ENCODE measurements at regions of chr1 and their contacts with region 1.

Region 1: GRCh38 chr1:205061665-205062069 is 18.7 kb downstream of the CNTN2 start:
- DNase-seq: peak; percentile 81
- ATAC-seq: peak; percentile 72
- H3K4me3 Mint-ChIP-seq: no peak overlapping the region
- H3K27ac Mint-ChIP-seq: no peak overlapping the region
- H3K4me1 Mint-ChIP-seq: no peaks in the 10 kb centered on the region
- H3K27me3 Mint-ChIP-seq: no peaks in the 10 kb centered on the region

Region 2: DNA sequence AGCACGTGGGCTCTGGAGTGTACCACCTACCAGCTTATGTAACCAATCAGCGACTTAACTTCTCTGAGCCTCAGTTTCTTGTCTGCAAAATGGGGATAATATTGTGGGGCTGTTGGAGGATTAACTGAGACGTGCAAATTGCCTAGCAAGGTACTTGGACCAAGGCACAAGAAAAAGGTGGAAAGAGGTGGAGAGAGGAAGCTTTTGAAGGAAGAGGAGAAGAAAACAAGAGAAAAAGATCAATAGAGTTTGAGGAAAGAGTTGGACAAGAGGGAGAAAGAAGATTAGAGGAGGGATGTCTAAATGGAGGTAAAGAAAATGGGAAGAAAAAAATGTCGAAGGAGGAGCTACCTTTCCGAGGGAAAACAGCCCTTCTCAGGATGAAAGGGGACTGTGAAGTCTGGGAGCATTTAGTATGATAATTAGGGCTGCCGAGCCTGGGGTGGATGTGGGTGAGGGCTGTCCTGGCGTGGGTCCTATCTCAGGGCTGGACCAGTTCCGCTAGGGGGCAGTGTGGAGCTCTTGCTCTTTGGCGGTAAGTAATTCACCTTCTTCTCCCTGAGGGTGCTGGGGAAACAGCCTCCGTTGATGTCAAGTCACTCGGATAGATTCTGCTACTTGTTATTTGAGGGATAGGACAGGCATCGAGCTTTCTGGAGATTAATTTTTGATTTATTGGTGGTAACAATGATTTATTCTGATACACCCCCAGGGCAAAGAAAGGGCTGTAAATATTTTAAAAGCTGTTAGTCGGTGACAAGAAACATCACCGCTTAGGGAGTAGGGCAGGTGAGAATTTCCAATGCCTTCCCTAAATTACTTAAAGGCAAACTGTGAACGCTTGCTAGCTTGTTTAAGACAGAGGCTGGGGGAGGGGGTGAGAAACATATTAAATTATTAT is 270.0 kb before region 1 on chr1:
- CTCF ChIA-PET with region 1: no interaction called
- POLR2A ChIA-PET with region 1: no interaction called
- DNase-seq: peak; percentile 88
- ATAC-seq: peak; percentile 98
- H3K4me3 Mint-ChIP-seq: no peak overlapping the region
- H3K27ac Mint-ChIP-seq: no peak overlapping the region
- H3K4me1 Mint-ChIP-seq: peaks cover 2% of the 10 kb centered on the region
- H3K27me3 Mint-ChIP-seq: peaks cover 26% of the 10 kb centered on the region

Region 3: GRCh38 chr1:204961765-204962419 is 99.8 kb before region 1 on chr1:
- CTCF ChIA-PET with region 1: interaction called, 11 read pairs
- POLR2A ChIA-PET with region 1: no interaction called
- DNase-seq: no peak
- ATAC-seq: no peak
- H3K4me3 Mint-ChIP-seq: no peak overlapping the region
- H3K27ac Mint-ChIP-seq: no peak overlapping the region
- H3K4me1 Mint-ChIP-seq: no peaks in the 10 kb centered on the region
- H3K27me3 Mint-ChIP-seq: peaks cover 31% of the 10 kb centered on the region

Region 4: GRCh38 chr1:204989266-204990058 is 72.2 kb before region 1 on chr1:
- CTCF ChIA-PET with region 1: interaction called, 236 read pairs
- POLR2A ChIA-PET with region 1: no interaction called
- DNase-seq: peak; percentile 73
- ATAC-seq: peak; percentile 66
- H3K4me3 Mint-ChIP-seq: no peak overlapping the region
- H3K27ac Mint-ChIP-seq: no peak overlapping the region
- H3K4me1 Mint-ChIP-seq: peaks cover 14% of the 10 kb centered on the region
- H3K27me3 Mint-ChIP-seq: peaks cover 9% of the 10 kb centered on the region

Region 5: GRCh38 chr1:205037539-205037938 is 24.1 kb before region 1 on chr1:
- CTCF ChIA-PET with region 1: interaction called, 15 read pairs
- POLR2A ChIA-PET with region 1: no interaction called
- DNase-seq: no peak
- ATAC-seq: no peak
- H3K4me3 Mint-ChIP-seq: no peak overlapping the region
- H3K27ac Mint-ChIP-seq: no peak overlapping the region
- H3K4me1 Mint-ChIP-seq: no peaks in the 10 kb centered on the region
- H3K27me3 Mint-ChIP-seq: peaks cover 25% of the 10 kb centered on the region

Region 6: GRCh38 chr1:205077158-205077933 is 15.7 kb after region 1 on chr1:
- CTCF ChIA-PET with region 1: interaction called, 81 read pairs
- POLR2A ChIA-PET with region 1: no interaction called
- DNase-seq: no peak
- ATAC-seq: no peak
- H3K4me3 Mint-ChIP-seq: no peak overlapping the region
- H3K27ac Mint-ChIP-seq: no peak overlapping the region
- H3K4me1 Mint-ChIP-seq: no peaks in the 10 kb centered on the region
- H3K27me3 Mint-ChIP-seq: no peaks in the 10 kb centered on the region

Region 7: GRCh38 chr1:205227584-205228006 is 165.9 kb after region 1 on chr1 and contains the start of gene TMCC2:
- CTCF ChIA-PET with region 1: interaction called, 12 read pairs
- POLR2A ChIA-PET with region 1: no interaction called
- DNase-seq: peak; percentile 91
- ATAC-seq: peak; percentile 95
- H3K4me3 Mint-ChIP-seq: peak within 1 kb of the TSS; percentile 80
- H3K27ac Mint-ChIP-seq: peak within 1 kb of the TSS; percentile 77
- H3K4me1 Mint-ChIP-seq: peaks cover 45% of the 10 kb centered on the region
- H3K27me3 Mint-ChIP-seq: peaks cover 34% of the 10 kb centered on the region
- total RNA-seq, gene TMCC2: 2.6 to 2.7 TPM